Cardiac septum (tissue), 1 donor: ENCODE measurements at regions of chr16 and their contacts with region 1.

Region 1: GRCh38 chr16:15777533-15778203 is 79.2 kb downstream of the MYH11 start:
- DNase-seq: no peak

Region 2: DNA sequence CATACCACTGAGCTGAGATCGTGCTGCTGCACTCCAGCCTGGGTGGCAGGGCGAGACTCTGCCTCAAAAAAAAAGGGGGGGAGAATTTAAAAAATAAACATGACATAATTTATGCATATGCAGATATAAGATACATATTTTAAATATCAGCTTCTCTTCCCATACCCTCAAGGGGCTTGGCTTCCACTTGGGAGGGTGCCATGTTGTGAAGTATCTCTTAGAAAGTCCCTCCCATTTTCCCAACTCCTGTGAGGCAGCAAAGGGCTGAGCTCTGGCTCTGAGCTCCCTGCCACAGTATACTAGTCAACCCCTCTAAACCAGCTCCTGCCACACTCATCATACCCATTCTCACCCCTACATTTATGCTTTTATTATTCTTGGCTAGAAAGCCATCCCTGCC is 39.8 kb after region 1 on chr16:
- intact Hi-C with region 1: loop called (anchors 5 kb)
- DNase-seq: peak; percentile 3